HEK293 (cell line): ENCODE measurements at regions of chr11 and their contacts with region 1.

Region 1: GRCh38 chr11:44621140-44621681 is 55.7 kb downstream of the CD82 start:
- H3K4me3 ChIP-seq: no peak overlapping the region
- H3K27ac ChIP-seq: no peak overlapping the region
- H3K4me1 ChIP-seq: no peaks in the 10 kb centered on the region
- CTCF ChIP-seq: peak; percentile 79

Region 2: DNA sequence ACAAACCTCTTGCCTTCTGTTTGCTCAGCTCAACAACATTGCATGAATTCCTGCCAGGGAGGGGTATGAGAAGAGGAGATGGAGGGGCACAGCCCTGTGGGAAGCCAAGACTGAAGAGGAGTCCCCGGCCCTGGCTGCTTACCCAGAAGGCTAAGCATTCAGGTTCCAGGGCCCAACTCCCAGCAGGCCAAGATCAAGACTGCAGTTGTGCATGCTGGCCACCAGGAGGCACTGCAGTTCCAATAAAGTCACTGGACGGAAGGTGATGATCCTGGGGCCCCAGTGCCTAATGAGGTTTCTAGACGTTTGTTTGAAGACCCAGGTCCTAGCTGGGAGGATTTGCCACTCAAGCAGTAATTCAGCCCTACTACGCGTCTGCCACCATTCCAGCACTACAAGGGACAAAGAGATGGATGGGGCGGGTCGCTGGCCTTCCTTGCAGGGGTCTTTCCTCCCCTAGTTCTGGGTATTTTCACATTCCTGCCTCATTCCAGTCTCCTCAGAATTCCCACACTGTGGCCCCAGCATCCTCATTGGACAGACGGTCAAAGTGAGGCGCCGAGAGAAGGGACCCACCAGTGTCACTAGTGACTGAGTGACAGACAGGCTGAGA is 334.8 kb before region 1 on chr11:
- CTCF ChIA-PET with region 1: interaction called, 10 read pairs
- POLR2A ChIA-PET with region 1: no interaction called
- H3K4me3 ChIP-seq: no peak overlapping the region
- H3K27ac ChIP-seq: no peak overlapping the region
- H3K4me1 ChIP-seq: no peaks in the 10 kb centered on the region
- CTCF ChIP-seq: peak; percentile 52; the same call in 1 of the 2 replicates

Region 3: DNA sequence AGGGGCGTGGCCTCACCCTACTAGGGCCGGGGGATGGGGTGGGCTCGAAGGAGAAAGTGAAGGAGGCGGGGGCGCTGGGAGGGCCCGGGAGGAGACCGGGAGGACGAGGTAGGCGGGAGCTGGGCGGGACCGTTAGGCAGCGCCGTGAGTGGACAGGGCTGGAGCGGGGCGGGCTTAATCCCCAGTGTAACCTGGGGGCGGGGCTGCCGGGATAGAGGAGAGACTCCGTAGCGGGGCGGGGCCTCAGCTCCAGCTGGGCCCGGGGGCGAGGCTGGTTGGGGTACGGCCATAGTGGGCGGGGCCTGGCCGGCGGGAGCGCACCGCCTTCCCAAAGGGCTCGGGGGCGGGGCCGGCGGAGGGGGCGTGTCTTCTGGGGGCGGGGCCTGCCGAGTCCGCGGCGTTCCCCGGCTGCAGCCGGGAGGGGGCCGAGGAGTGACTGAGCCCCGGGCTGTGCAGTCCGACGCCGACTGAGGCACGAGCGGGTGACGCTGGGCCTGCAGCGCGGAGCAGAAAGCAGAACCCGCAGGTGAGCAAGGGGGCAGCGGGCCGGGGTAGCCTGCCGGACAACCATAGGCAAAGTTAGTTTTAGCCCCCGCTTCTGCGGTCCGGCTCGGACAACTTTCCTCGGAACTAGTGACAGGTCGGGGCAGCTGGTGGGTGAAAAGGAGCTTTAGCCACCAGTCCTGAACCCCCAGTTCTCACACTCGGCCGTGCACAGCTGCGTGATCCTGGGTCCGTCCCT is 55.8 kb before region 1 on chr11 and contains the start of gene CD82:
- CTCF ChIA-PET with region 1: interaction called, 275 read pairs
- POLR2A ChIA-PET with region 1: interaction called, 3 read pairs
- H3K4me3 ChIP-seq: peak within 1 kb of the TSS; percentile 39
- H3K27ac ChIP-seq: peak within 1 kb of the TSS; percentile 45; the same call in 1 of the 2 replicates
- H3K4me1 ChIP-seq: no peaks in the 10 kb centered on the region; the same call in 1 of the 2 replicates
- CTCF ChIP-seq: no peak

Region 4: DNA sequence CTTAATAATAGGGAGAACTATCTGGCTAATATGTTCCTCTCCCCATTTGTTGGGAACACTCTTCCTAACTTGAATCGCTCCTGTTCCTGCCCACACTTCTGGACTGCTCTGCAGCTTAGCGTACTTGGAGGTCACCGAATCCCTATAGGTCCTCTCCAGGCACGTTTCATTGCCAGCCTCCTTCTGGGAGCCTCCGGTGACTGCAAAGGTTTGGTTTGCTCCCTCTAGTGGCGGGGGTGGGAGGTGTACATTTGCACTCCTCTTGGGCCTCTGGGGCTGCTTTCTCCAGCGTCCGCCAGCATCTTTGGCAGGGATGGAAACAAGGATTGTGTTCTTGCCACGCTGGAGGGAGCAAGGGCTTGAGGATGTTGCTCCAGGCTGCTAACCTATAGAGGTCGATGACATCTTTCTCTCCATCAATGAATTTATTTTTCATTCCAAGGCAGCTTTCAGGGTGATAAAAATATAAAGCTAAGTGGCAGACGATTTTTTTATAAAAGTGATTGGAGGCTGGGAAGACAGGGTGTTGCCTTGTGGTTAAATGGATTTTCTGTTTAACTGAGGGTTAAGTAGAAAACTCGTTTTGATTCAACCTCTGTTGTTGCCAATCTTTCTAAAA is 154.3 kb after region 1 on chr11:
- CTCF ChIA-PET with region 1: interaction called, 25 read pairs
- POLR2A ChIA-PET with region 1: no interaction called
- H3K4me3 ChIP-seq: no peak overlapping the region
- H3K27ac ChIP-seq: no peak overlapping the region
- H3K4me1 ChIP-seq: no peaks in the 10 kb centered on the region
- CTCF ChIP-seq: peak; percentile 61; the same call in 1 of the 2 replicates

Region 5: GRCh38 chr11:44911029-44911814 is 290.0 kb after region 1 on chr11:
- CTCF ChIA-PET with region 1: interaction called, 82 read pairs
- POLR2A ChIA-PET with region 1: no interaction called
- H3K4me3 ChIP-seq: no peak overlapping the region
- H3K27ac ChIP-seq: no peak overlapping the region
- H3K4me1 ChIP-seq: no peaks in the 10 kb centered on the region
- CTCF ChIP-seq: peak; percentile 37; the same call in 1 of the 2 replicates